Activated CD4-positive, alpha-beta T cell treated with anti-CD3 and anti-CD28 coated beads, Interleukin-2, amount 10 ng/mL, durations not matched to agents 24 days and 14 days (primary cell): ENCODE measurements at regions of chr6 and their contacts with region 1.

Region 1: DNA sequence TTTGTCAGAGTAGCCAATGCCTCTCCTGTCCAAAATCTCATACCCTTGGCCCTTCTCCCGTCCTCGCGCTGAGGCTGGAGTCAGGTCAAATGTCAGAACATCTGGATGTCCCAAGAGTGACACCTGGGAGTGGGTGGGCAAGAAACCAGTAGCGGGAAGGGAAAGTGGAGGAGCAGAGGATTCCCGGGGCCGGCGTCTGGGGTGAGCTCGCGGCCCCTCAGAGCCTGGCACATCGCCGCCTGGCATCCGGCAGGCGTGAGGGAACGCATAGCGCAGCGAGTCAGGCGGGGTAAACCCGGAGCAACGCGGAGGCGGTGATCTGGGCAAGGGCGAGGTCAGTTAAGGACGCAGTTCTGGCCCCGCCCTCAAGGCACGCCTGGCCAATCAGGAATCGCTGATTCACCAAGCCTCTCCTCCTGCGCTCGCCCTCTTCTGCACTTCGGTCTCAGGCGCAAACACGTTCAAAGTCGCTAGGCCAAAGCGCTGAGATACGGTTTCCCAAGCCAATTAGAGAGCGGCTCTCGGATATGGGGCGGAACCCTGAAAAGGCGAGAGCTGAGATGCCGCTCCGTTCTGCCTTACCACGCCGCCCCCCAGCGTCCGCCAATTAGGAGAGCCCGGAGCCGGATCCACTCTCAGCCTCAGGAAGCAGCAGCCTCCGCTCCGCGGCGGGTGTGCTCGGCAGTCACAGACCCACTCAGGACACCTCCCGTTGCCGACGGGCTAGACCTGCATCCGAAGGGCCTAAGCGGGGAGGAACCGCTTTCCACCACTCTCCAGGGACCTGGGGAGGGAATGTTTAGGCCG is 22.5 kb downstream of the VPS52 start:
- DNase-seq: peak; percentile 98
- H3K4me3 Mint-ChIP-seq: peak overlapping the region; percentile 91
- H3K27ac Mint-ChIP-seq: peak overlapping the region; percentile 94
- H3K4me1 Mint-ChIP-seq: peaks cover 34% of the 10 kb centered on the region
- H3K27me3 Mint-ChIP-seq: peaks cover 4% of the 10 kb centered on the region

Region 2: GRCh38 chr6:33095681-33096080 is 153.4 kb before region 1 on chr6:
- intact Hi-C with region 1: no loop called
- DNase-seq: peak; percentile 50
- H3K4me3 Mint-ChIP-seq: no peak overlapping the region
- H3K27ac Mint-ChIP-seq: no peak overlapping the region
- H3K4me1 Mint-ChIP-seq: peaks cover 3% of the 10 kb centered on the region
- H3K27me3 Mint-ChIP-seq: peaks cover 45% of the 10 kb centered on the region

Region 3: DNA sequence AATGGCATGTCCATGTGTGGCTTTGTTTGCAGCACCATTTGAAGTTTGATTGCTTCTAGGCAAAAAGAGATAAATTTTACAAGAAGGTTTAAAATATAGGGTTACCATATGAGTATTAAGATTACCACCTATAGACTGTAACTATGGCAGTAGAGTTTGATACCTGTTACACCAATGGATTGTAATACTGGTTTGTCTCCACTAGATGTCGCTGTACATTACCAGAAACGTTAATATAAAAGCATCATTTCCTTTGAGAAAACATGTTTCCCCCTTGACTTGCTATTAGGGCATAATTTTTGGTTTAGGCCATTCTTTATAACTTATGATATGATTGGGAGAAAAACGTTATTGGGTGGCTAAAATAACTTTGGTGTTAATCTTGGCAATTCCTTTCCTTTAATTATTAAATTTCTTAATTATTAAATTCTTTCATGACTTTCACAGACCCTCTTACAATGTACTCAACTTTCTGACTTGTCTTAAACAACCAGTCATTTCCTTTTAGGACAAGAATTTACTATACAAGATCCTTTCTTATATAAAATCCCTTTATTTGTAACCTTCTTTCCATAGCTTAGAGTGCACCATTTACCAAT is 130.5 kb before region 1 on chr6:
- intact Hi-C with region 1: loop called (anchors 1 kb)
- DNase-seq: peak; percentile 81
- H3K4me3 Mint-ChIP-seq: no peak overlapping the region
- H3K27ac Mint-ChIP-seq: no peak overlapping the region
- H3K4me1 Mint-ChIP-seq: peaks cover 12% of the 10 kb centered on the region
- H3K27me3 Mint-ChIP-seq: peaks cover 70% of the 10 kb centered on the region

Region 4: GRCh38 chr6:33123732-33124524 is 125.2 kb before region 1 on chr6:
- intact Hi-C with region 1: loop called (anchors 1 kb)
- DNase-seq: peak; percentile 80
- H3K4me3 Mint-ChIP-seq: no peak overlapping the region
- H3K27ac Mint-ChIP-seq: no peak overlapping the region
- H3K4me1 Mint-ChIP-seq: peaks cover 11% of the 10 kb centered on the region
- H3K27me3 Mint-ChIP-seq: peaks cover 26% of the 10 kb centered on the region

Region 5: DNA sequence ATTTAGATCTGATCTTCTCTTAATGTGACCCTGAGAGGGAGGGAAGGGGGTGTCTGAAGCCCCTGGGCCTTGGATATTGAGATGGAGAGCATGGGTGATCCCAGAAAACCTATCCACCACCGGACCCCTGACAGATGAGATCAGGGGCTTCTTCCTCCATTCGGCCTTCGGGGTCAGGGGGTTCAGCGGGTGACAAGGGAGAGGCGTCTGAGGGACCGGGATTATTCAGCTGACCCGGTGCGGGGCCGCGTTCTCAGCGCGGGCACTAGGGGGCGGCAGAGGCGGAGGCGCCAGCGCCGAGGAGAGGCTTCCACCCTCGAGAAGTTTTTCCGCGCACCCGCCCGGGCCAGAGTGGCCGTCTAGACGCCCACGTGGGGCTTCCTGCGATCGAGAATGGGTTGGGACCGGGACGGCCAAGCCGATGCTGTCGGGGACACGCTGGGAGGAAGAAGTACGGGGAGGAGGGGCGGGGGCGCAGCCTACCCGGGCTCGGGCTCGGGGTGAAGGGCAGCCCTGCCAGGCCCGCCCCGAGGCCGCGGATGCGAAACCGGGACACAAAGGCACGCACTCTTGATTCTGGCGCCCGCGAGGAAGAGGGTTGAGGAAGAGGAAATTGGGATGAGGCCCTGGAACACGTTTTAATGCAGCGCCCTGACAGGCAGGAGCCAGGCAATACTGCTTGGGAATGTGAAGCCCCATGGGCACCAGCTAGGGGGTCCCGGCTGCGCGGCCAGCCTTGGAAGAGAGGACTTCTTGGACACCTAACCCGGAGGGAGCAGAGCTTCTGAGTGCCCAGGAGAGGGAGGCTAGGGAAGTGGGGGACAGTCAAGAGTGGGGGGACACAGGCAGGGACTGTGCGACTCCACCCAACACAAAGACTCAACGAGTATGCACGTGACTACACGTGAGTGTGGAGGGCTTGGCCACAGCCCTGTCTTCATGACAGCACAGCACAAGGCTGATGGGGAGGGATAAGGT is 87.5 kb before region 1 on chr6:
- intact Hi-C with region 1: loop called (anchors 1 kb)
- DNase-seq: peak; percentile 96
- H3K4me3 Mint-ChIP-seq: peak overlapping the region; percentile 87
- H3K27ac Mint-ChIP-seq: peak overlapping the region; percentile 86
- H3K4me1 Mint-ChIP-seq: peaks cover 14% of the 10 kb centered on the region
- H3K27me3 Mint-ChIP-seq: peaks cover under 1% of the 10 kb centered on the region

Region 6: DNA sequence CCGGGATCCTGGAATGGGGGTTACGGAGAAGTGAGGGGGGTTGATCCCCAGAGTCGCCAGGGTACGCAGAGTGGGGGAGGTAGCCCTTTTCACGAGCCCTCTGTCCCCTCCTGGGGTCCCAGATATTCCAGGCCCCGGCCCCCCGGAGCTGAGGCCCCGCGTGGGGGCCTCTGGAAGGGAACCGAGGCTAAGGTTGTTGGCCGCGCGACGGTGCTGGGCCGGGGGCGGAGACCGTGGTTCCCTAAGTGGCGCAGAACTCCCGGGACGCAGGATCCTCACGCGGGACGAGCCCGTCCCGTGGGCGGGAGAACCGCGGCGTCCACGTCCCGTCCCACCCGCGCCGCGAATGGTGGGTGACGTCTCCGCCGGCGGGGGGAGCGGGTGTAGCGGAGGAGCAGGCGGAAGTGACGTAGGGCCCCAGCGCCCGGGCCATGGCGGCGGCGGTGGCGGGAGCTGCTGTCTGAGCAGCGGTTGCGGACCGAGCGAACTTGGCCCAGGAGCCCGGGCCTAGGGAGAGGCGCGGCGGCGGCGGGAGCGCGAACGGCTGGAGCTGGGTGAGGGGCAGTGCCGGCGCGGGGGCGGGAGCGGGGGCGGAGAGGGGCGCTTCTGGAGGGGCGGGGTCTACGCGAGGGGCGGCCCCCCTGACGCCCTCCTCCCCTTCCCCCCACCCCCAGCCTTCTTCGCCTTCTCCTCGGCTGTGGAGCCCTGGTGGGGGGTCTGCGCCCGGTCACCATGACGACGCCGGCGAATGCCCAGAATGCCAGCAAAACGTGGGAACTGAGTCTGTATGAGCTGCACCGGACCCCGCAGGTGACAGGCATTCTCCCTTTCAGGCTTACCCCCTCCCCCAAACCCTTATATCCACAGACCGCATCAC is 40.8 kb before region 1 on chr6 and contains the start of gene RING1:
- intact Hi-C with region 1: loop called (anchors 1 kb)
- DNase-seq: peak; percentile 97
- H3K4me3 Mint-ChIP-seq: peak within 1 kb of the TSS; percentile 89
- H3K27ac Mint-ChIP-seq: peak within 1 kb of the TSS; percentile 97
- H3K4me1 Mint-ChIP-seq: peaks cover 46% of the 10 kb centered on the region
- H3K27me3 Mint-ChIP-seq: peaks cover 13% of the 10 kb centered on the region
- total RNA-seq, gene RING1: 44.4 and 47.6 TPM in 2 replicates

Region 7: GRCh38 chr6:33276864-33277662 is 27.9 kb after region 1 on chr6 and contains the start of gene B3GALT4:
- intact Hi-C with region 1: loop called (anchors 1 kb)
- DNase-seq: peak; percentile 94
- H3K4me3 Mint-ChIP-seq: peak within 1 kb of the TSS; percentile 94
- H3K27ac Mint-ChIP-seq: peak within 1 kb of the TSS; percentile 91
- H3K4me1 Mint-ChIP-seq: peaks cover 56% of the 10 kb centered on the region
- H3K27me3 Mint-ChIP-seq: no peaks in the 10 kb centered on the region
- total RNA-seq, gene B3GALT4: 4.1 and 4.6 TPM in 2 replicates

Region 8: DNA sequence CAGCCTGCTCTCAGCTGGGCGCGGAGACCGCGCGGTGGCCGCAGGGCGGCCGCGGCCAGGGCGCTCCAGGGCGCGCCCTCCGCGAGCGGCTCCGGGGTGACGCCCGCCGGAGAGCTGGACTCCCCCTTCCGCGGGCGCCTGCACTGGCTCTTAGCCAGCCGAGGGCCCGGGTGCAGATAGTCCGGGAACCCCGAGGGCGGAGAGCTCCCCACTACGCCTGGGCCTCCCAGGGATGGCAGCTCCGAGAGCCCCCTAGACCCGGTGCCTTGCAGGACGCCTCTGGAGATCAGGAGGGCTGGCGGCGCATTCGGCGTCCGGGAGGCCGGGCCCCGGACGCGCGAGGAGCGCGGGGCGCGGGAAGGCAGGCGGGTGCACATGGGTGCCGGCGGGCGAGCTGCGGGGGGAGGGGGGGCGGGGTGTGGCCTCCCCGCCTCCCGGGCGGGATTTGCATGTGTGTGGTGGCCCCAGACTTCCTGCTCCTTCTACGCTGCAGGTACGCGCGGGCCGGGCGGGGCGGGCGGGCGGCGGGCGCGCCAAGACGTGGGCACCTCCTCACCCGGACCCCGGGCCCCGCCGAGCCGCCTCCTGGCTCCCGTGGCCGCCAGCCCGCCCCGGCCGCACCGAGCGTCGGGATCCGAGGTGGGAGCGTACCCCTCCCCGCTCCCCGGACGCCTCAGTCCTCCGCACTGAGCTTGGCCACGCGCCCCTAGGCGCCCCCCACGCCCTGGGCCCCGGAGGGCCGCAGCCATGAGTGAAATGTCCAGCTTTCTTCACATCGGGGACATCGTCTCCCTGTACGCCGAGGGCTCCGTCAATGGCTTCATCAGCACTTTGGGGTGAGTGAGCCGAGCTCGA is 372.0 kb after region 1 on chr6 and contains the start of gene ITPR3:
- intact Hi-C with region 1: no loop called
- DNase-seq: peak; percentile 92
- H3K4me3 Mint-ChIP-seq: peak within 1 kb of the TSS; percentile 96
- H3K27ac Mint-ChIP-seq: peak within 1 kb of the TSS; percentile 91
- H3K4me1 Mint-ChIP-seq: peaks cover 48% of the 10 kb centered on the region
- H3K27me3 Mint-ChIP-seq: no peaks in the 10 kb centered on the region
- total RNA-seq, gene ITPR3: 45.5 and 45.6 TPM in 2 replicates